WTC11 (cell line): ENCODE measurements at regions of chr6 and their contacts with region 1.

Region 1: DNA sequence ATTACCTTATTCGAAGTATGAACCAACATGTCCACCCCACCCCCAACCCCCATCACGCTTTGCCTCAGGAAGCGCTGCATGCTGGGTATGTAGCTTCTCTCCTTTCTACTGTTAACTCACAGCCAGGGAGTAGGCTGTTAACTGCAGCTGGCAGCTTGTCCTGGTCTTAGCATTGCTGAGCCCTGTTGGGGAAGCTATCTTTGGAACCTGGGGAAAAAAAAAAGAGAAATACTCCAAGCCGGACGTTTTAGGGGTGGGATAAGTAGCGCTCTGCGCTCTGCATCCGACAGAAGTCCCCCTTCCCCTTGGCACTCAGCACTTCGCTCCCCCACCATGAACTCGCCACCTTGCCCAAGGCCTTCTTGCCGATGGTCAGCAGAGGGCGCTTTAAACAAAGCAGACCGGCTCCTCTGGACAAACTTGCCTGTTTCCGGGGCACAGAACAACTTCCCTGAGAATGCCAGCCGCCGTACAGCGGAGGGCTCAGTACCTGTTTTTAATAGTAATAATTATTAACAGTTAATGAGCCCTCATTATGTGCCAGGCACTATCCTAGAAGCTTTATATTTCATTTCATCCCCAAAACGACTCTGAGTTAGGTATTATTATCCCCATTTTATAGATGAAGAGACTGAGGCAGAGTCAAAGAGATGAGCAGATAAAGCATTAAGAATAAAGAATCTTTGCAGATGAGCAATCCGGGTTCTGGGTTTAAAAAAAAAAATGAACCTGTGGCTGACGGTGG is 35.2 kb upstream of the MDFI start:
- DNase-seq: peak; percentile 88
- ATAC-seq: peak; percentile 66
- H3K4me3 Mint-ChIP-seq: peak overlapping the region; percentile 61
- H3K27ac Mint-ChIP-seq: no peak overlapping the region
- H3K4me1 Mint-ChIP-seq: peaks cover 36% of the 10 kb centered on the region
- H3K27me3 Mint-ChIP-seq: no peaks in the 10 kb centered on the region
- CTCF ChIP-seq: peak; percentile 79

Region 2: GRCh38 chr6:41470331-41471063 is 132.5 kb before region 1 on chr6:
- CTCF ChIA-PET with region 1: interaction called, 11 read pairs
- POLR2A ChIA-PET with region 1: no interaction called
- DNase-seq: peak; percentile 54
- ATAC-seq: peak; percentile 31
- H3K4me3 Mint-ChIP-seq: peak overlapping the region; percentile 70
- H3K27ac Mint-ChIP-seq: no peak overlapping the region
- H3K4me1 Mint-ChIP-seq: peaks cover 47% of the 10 kb centered on the region
- H3K27me3 Mint-ChIP-seq: peaks cover 92% of the 10 kb centered on the region
- CTCF ChIP-seq: no peak

Region 3: DNA sequence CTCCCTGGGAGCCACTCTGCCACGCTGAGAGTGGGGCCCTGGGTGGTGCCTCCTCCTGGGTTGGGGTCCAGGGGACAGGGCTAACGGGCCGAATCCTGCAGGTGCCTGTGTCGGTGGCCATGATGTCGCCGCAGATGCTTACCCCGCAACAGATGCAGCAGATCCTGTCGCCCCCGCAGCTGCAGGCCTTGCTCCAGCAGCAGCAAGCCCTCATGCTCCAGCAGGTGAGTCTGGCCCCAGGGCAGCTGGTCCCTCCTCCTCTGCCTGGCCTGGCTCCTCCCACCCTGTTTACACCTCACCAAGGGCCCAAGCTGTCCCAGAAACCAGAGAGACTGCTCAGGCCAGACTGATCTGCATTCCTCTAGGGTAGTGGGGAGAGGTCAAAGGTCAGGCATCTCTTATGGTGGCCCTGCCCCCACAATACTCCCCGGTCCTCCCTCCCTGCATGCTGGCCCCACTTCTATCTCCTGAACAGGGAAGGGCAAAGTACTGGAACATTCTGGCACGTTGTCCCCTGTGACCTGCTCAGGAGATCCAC is 18.3 kb before region 1 on chr6:
- CTCF ChIA-PET with region 1: interaction called, 19 read pairs
- POLR2A ChIA-PET with region 1: no interaction called
- DNase-seq: peak; percentile 84
- ATAC-seq: peak; percentile 90
- H3K4me3 Mint-ChIP-seq: no peak overlapping the region
- H3K27ac Mint-ChIP-seq: no peak overlapping the region; the same call in 1 of the 2 replicates
- H3K4me1 Mint-ChIP-seq: peaks cover 67% of the 10 kb centered on the region
- H3K27me3 Mint-ChIP-seq: no peaks in the 10 kb centered on the region
- CTCF ChIP-seq: no peak

Region 4: GRCh38 chr6:41638002-41638934 is 35.2 kb after region 1 on chr6 and contains the start of gene MDFI:
- CTCF ChIA-PET with region 1: interaction called, 23 read pairs
- POLR2A ChIA-PET with region 1: no interaction called
- DNase-seq: peak; percentile 78
- ATAC-seq: peak; percentile 45
- H3K4me3 Mint-ChIP-seq: peak within 1 kb of the TSS; percentile 87
- H3K27ac Mint-ChIP-seq: peak within 1 kb of the TSS; percentile 45; the same call in 1 of the 2 replicates
- H3K4me1 Mint-ChIP-seq: peaks cover 64% of the 10 kb centered on the region
- H3K27me3 Mint-ChIP-seq: peaks cover 46% of the 10 kb centered on the region
- CTCF ChIP-seq: no peak
- total RNA-seq, gene MDFI: 63.2 to 86.2 TPM (median 74.6 TPM) in 3 replicates

Region 5: DNA sequence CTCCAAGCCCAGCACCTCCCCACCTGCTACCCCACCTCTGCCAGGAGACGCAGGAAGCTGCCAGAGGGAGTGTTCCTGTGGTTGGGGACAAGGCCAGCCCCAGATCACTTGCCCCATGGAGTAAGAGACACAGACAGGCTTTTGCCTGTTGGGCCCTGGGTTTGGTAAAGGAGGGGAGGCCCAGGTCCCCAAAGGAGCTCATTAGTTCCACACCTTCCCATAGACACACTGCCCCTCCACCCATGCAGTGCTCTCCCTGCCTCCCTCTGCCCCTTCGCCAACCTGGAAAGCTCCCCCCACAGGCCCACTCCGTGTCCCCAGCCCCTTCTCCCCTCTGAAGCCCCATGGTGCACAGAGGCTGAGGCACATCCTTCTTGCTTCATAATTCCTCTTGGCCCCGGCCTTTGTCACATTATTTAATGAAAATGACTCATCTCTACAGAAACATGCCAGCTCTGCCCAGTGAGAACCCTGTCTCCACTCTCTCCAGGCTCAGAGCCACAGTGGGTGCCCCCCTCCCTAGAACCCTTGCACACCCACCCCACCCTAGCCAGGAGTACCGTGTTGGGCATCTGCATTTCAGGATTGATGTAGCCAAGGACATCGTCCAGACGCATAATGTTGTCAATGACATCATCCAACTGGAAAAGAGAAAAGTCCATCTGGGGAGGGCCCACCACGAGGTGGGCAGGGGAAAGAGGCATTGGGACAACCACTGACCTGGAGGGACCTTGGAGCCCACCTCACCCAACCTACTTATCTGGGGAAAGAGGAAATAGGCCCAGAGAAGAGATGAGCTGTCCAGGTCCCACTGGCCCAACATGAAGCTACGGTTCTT is 86.4 kb after region 1 on chr6:
- CTCF ChIA-PET with region 1: interaction called, 144 read pairs
- POLR2A ChIA-PET with region 1: interaction called, 7 read pairs
- DNase-seq: peak; percentile 4
- ATAC-seq: no peak
- H3K4me3 Mint-ChIP-seq: no peak overlapping the region
- H3K27ac Mint-ChIP-seq: no peak overlapping the region
- H3K4me1 Mint-ChIP-seq: peaks cover 19% of the 10 kb centered on the region
- H3K27me3 Mint-ChIP-seq: peaks cover 6% of the 10 kb centered on the region
- CTCF ChIP-seq: no peak

Region 6: DNA sequence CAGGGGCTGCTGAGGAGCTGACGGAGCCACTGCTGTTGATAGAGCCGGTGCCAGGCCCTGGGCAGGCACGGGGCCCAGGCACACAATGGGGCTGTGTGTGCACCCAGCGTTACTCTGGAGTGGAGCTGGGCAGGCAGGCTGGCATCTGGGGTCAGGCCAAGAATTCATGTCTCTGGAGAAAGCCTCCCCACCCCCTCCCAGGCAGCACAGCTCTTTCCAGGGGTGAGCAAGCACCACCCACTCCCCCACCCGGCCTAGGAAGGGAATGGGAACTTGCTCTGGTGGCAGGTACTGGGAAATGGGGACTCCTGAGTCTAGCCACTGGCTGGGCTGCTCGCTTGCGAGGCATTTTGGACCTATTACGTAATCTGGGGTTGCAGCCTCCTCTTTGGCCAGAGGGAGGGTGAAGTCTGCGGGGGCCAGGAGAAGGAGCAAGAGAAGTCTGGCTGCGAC is 109.6 kb after region 1 on chr6:
- CTCF ChIA-PET with region 1: no interaction called
- POLR2A ChIA-PET with region 1: no interaction called
- DNase-seq: no peak
- ATAC-seq: no peak
- H3K4me3 Mint-ChIP-seq: no peak overlapping the region
- H3K27ac Mint-ChIP-seq: no peak overlapping the region
- H3K4me1 Mint-ChIP-seq: no peaks in the 10 kb centered on the region
- H3K27me3 Mint-ChIP-seq: no peaks in the 10 kb centered on the region
- CTCF ChIP-seq: no peak

Region 7: GRCh38 chr6:41763470-41763869 is 160.4 kb after region 1 on chr6:
- CTCF ChIA-PET with region 1: no interaction called
- POLR2A ChIA-PET with region 1: no interaction called
- DNase-seq: no peak
- ATAC-seq: no peak
- H3K4me3 Mint-ChIP-seq: no peak overlapping the region
- H3K27ac Mint-ChIP-seq: no peak overlapping the region
- H3K4me1 Mint-ChIP-seq: peaks cover 8% of the 10 kb centered on the region
- H3K27me3 Mint-ChIP-seq: no peaks in the 10 kb centered on the region; the same call in 1 of the 2 replicates
- CTCF ChIP-seq: no peak